Transverse colon (tissue), 4 donors: ENCODE measurements at regions of chr19 and their contacts with region 1.

Region 1: DNA sequence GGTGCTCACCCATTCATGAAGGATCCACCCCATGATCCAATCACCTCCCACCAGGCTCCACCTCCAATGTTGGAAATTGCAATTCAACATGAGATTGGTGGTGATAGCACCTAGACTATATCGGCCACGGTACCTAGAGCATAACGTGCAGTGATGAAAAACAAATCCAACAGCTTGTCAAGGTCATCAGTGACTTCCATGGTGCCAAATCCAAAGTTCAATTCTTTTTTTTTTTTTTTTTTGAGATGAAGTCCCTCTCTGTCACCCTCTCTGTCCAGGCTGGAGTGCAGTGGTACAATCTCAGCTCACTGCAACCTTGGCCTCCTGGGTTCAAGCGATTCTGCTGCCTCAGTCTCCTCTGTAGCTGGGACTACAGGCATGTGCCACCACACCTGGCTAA is 17.1 kb upstream of the ACP7 start:
- DNase-seq: no peak
- H3K4me3 ChIP-seq: no peak overlapping the region
- H3K27ac ChIP-seq: no peak overlapping the region
- H3K4me1 ChIP-seq: no peaks in the 10 kb centered on the region
- H3K27me3 ChIP-seq: no peaks in the 10 kb centered on the region
- CTCF ChIP-seq: no peak
- EP300 ChIP-seq: no peak
- POLR2A ChIP-seq: no peak

Region 2: DNA sequence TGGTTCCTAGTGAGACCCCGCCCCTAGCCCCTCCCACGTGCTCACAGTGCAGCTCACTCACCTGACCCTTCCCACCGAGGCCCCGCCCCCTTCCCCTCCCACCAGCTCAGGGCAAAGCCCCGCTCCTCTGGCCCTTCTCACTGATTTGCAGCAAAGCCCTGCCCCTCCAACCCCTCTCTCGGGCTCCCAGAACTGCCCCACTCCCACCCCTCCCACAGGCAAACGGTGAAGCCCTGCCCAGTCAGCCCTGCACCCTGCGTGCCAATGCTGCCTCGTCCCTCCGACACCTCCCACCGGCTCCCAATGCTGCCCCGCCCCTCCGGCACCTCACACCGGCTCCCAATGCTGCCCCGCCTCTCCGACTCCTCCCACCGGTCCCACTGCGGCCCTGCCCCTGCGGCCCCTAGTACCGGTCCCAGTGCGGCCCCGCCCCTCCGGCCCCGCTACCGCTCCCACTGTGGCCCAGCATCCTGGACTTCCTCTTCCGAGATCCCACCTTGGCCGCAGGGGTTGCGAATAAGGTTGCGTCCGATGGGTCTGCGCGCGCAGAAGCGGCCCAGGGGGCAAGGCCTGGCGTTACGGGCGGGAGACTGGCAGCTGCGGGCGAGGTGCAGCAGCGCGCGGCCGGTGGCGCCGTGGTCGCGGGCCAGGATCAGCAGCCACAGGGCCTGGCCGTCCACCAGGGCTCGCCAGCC is 35.6 kb before region 1 on chr19:
- in situ Hi-C with region 1: no loop called
- intact Hi-C with region 1: loop called (anchors 1 kb)
- DNase-seq: peak; percentile 90
- H3K4me3 ChIP-seq: peak overlapping the region; percentile 32 to 70 (median 54)
- H3K27ac ChIP-seq: peak overlapping the region in 3 of 4 donors; percentile 44 to 66 (median 62)
- H3K4me1 ChIP-seq: peaks cover 6 to 27% (median 18%) of the 10 kb centered on the region in 4 donors
- H3K27me3 ChIP-seq: peaks cover 50% of the 10 kb centered on the region
- CTCF ChIP-seq: no peak
- EP300 ChIP-seq: no peak
- POLR2A ChIP-seq: no peak

Region 3: DNA sequence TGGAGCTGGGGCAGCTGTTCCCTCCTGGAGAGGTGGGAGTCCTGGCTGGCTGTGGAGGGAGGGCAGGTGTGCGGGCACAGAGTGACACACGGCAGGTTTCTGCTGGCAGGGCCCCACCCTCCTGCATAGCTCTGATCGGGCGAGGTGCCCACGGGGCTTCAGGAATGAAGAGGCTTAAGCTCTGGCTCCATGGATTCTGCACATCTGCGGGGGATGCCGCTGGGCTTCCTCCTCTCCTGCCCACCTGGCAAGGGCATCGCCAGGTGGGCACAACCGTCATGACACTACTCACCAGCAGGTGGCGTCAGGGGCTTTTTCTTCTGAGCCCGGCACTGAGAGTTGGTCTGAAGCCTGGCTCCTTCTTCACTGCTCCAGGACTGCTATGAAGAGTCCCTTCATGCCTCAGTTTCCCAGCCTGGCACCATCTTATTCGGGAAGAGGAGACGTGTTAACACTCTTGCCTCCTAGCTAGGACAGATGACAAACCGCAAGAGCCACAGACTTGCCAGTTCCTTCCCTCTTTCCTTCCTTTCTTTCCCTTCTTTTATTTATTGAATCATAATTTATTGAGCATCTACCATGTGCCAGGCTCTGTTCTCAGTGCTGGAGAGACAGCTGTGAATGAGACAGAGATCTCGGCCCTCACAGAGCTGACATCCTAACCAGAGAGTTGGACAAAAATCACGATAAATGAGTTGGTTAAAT is 43.3 kb after region 1 on chr19:
- in situ Hi-C with region 1: no loop called
- intact Hi-C with region 1: no loop called
- DNase-seq: peak; percentile 73
- H3K4me3 ChIP-seq: no peak overlapping the region
- H3K27ac ChIP-seq: no peak overlapping the region
- H3K4me1 ChIP-seq: no peaks in the 10 kb centered on the region
- H3K27me3 ChIP-seq: peaks cover 37% of the 10 kb centered on the region
- CTCF ChIP-seq: peak; percentile 73 to 78 (median 76)
- EP300 ChIP-seq: no peak
- POLR2A ChIP-seq: no peak